Naive thymus-derived CD4-positive, alpha-beta T cell (primary cell): ENCODE measurements at regions of chr2 and their contacts with region 1.

Region 1: DNA sequence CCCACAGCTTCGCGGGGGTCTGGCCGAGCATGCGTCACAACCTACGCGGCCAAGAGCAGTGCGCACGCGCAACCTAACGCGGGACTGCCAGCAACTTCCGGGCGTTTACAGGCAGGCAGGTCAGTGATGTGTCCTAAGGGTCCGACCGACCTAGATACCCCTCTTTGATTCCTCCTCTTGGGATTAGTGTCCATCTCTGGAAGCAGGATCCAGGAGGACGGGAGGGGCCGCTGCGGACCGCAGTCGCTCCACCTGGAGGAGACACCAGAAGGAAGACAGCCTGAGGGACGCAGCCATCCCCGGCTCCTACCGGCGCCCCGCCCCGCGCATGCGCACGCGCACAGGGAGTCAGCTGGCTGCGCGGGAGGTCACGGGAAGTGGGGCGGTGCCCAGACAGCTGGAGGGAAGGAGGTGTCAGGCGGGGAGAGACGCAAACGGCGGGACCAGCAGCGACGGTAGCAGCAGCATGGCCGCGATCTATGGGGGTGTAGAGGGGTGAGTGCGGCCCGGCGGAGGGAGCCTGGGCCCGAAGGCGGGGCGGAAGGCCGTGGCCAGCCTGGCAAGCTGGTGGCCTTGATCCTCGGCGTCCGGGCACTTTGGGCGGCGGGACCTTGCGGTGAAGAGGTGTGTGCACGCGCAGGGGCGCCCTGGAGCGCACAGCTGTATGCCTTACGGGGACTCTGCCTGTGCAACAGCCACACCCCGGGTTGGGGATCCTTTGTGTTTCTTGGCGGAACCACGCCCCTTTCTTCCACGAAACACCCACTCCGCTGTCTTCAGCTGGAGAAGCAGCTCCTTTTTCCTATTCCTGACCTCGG is at the start of gene NAGK:
- DNase-seq: peak; percentile 97 to 99 (median 99)
- ATAC-seq: peak; percentile 86
- H3K4me3 ChIP-seq: peak within 1 kb of the TSS; percentile 81
- H3K4me3 Mint-ChIP-seq: peak within 1 kb of the TSS; percentile 89 to 100 (median 98)
- H3K27ac ChIP-seq: peak within 1 kb of the TSS; percentile 96
- H3K27ac Mint-ChIP-seq: peak within 1 kb of the TSS; percentile 97 to 100 (median 99)
- H3K4me1 ChIP-seq: peaks cover 39 to 50% of the 10 kb centered on the region in 2 donors
- H3K4me1 Mint-ChIP-seq: peaks cover 40 to 68% (median 57%) of the 10 kb centered on the region in 7 donors
- H3K27me3 ChIP-seq: no peaks in the 10 kb centered on the region
- H3K27me3 Mint-ChIP-seq: peaks cover 0 to 7% (median 0%) of the 10 kb centered on the region in 5 donors
- total RNA-seq, gene NAGK: 92.4 to 169 (median 127) TPM

Region 2: DNA sequence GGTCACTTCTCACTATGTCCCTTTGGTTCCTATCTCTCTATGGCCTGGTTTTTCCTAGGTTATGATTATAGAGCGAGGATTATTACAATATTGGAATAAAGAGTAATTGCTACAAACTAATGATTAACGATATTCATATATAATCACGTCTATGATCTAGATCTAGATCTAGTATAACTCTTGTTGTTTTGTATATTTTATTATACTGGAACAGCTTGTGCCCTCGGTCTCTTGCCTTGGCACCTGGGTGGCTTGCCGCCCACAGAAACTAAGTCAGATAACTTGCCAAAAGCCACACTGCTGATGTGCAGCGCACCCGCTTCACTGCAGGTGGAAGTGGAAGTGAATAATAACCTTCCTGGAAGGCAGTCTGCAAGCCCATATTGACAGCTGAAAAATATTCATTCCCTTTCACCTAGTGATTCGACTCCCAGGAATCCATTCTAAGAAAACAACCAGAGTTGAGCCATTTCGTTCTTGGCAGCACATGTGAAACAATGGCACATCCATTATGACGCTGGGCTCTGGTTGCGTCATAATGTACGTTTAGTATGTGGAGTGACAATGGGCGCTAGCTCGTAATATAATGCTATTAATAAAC is 90.7 kb before region 1 on chr2:
- CTCF ChIA-PET with region 1: no interaction called
- POLR2A ChIA-PET with region 1: interaction called, 8 read pairs
- intact Hi-C with region 1: loop called in 1 of 2 experiments (anchors 5 kb)
- DNase-seq: peak in 5 of 9 donors; percentile 25 to 42 (median 29)
- ATAC-seq: peak; percentile 28
- H3K4me3 ChIP-seq: peak overlapping the region; percentile 81
- H3K4me3 Mint-ChIP-seq: peak overlapping the region; percentile 76 to 95 (median 86)
- H3K27ac ChIP-seq: peak overlapping the region; percentile 36
- H3K27ac Mint-ChIP-seq: peak overlapping the region; percentile 60 to 93 (median 83)
- H3K4me1 ChIP-seq: peaks cover 9% of the 10 kb centered on the region in 2 donors
- H3K4me1 Mint-ChIP-seq: peaks cover 8 to 23% (median 16%) of the 10 kb centered on the region in 7 donors
- H3K27me3 ChIP-seq: no peaks in the 10 kb centered on the region
- H3K27me3 Mint-ChIP-seq: peaks cover 0 to 22% (median 2%) of the 10 kb centered on the region in 5 donors

Region 3: DNA sequence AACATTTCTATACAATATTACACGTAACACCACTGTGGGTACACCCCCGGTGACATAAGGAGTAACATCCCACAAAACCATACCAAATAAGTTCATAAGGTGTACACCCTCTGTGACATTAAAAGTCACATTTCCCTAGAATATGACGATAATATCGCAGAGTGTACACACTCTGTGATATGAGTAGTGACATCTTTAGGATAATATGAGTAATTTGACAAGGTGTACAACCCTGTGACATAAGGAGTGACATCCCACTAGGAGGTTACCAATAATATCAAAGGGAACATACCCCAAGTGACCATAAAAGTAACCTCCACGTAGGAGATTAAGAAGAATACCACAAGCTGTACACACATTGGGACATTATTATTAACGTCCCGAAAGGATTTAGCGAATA is 49.8 kb before region 1 on chr2:
- CTCF ChIA-PET with region 1: no interaction called
- POLR2A ChIA-PET with region 1: interaction called, 4 read pairs
- intact Hi-C with region 1: loop called (anchors 1 to 10 kb)
- DNase-seq: no peak
- ATAC-seq: peak; percentile 20
- H3K4me3 ChIP-seq: no peak overlapping the region
- H3K4me3 Mint-ChIP-seq: no peak overlapping the region
- H3K27ac ChIP-seq: no peak overlapping the region
- H3K27ac Mint-ChIP-seq: no peak overlapping the region
- H3K4me1 ChIP-seq: no peaks in the 10 kb centered on the region
- H3K4me1 Mint-ChIP-seq: peaks cover 4 to 7% (median 7%) of the 10 kb centered on the region in 7 donors
- H3K27me3 ChIP-seq: no peaks in the 10 kb centered on the region
- H3K27me3 Mint-ChIP-seq: peaks cover 0 to 6% (median 0%) of the 10 kb centered on the region in 5 donors

Region 4: GRCh38 chr2:71082402-71083252 is 14.2 kb after region 1 on chr2:
- CTCF ChIA-PET with region 1: interaction called, 3 read pairs
- POLR2A ChIA-PET with region 1: interaction called, 22 read pairs
- intact Hi-C with region 1: no loop called
- DNase-seq: no peak
- ATAC-seq: no peak
- H3K4me3 ChIP-seq: no peak overlapping the region
- H3K4me3 Mint-ChIP-seq: peak overlapping the region in 4 of 10 donors; percentile 3 to 45 (median 14)
- H3K27ac ChIP-seq: no peak overlapping the region
- H3K27ac Mint-ChIP-seq: peak overlapping the region in 5 of 9 donors; percentile 11 to 79 (median 72)
- H3K4me1 ChIP-seq: peaks cover 5 to 6% of the 10 kb centered on the region in 2 donors
- H3K4me1 Mint-ChIP-seq: peaks cover 2 to 20% (median 14%) of the 10 kb centered on the region in 7 donors
- H3K27me3 ChIP-seq: no peaks in the 10 kb centered on the region
- H3K27me3 Mint-ChIP-seq: peaks cover 0 to 11% (median 6%) of the 10 kb centered on the region in 5 donors

Region 5: GRCh38 chr2:71276311-71277146 is 208.1 kb after region 1 on chr2:
- CTCF ChIA-PET with region 1: no interaction called
- POLR2A ChIA-PET with region 1: interaction called, 4 read pairs
- intact Hi-C with region 1: loop called (anchors 1 to 2 kb)
- DNase-seq: peak; percentile 70 to 92 (median 84)
- ATAC-seq: peak; percentile 100
- H3K4me3 ChIP-seq: peak overlapping the region; percentile 67
- H3K4me3 Mint-ChIP-seq: peak overlapping the region; percentile 39 to 85 (median 76)
- H3K27ac ChIP-seq: no peak overlapping the region
- H3K27ac Mint-ChIP-seq: no peak overlapping the region
- H3K4me1 ChIP-seq: peaks cover 4 to 16% of the 10 kb centered on the region in 2 donors
- H3K4me1 Mint-ChIP-seq: peaks cover 10 to 18% (median 13%) of the 10 kb centered on the region in 7 donors
- H3K27me3 ChIP-seq: peaks cover 11 to 15% of the 10 kb centered on the region in 2 donors
- H3K27me3 Mint-ChIP-seq: peaks cover 78 to 89% (median 86%) of the 10 kb centered on the region in 5 donors